Mammary epithelial cell (primary cell): ENCODE measurements at regions of chr20 and their contacts with region 1.

Region 1: DNA sequence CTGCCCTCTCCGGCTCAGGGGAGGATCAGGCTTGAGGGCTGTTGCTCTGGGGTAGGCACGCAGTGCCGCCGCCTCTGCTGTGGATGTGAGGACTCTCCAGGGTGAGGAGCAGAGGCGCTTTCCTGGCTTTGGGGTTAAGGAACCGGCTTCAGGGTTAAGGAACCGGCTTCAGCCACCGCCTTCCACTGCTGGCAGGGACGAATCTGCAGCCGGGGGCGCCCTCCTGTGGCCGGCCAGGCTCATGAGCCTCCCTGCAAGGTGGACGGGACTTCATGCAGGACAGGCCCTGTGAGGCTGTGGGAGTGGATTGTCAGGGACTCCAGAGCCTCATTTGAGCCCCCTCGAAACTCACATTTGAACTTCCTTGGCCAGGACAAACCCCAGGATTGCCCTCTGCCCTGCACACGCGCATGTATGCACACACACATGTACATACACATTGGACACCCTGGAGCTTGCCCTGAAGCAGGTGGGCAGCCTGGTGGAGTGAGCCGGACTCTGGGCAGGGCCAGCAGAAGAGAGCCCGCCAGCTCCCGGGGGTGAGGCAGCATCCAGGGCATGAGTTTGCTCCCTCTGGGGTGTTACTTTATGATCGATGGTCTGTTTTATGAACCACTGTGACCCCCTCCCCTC is 146.8 kb downstream of the PHACTR3 start:
- DNase-seq: peak; percentile 42
- H3K4me3 ChIP-seq: no peak overlapping the region
- H3K27ac ChIP-seq: no peak overlapping the region
- H3K4me1 ChIP-seq: no peaks in the 10 kb centered on the region
- H3K27me3 ChIP-seq: peaks cover 7% of the 10 kb centered on the region
- CTCF ChIP-seq: peak; percentile 64 to 85

Region 2: DNA sequence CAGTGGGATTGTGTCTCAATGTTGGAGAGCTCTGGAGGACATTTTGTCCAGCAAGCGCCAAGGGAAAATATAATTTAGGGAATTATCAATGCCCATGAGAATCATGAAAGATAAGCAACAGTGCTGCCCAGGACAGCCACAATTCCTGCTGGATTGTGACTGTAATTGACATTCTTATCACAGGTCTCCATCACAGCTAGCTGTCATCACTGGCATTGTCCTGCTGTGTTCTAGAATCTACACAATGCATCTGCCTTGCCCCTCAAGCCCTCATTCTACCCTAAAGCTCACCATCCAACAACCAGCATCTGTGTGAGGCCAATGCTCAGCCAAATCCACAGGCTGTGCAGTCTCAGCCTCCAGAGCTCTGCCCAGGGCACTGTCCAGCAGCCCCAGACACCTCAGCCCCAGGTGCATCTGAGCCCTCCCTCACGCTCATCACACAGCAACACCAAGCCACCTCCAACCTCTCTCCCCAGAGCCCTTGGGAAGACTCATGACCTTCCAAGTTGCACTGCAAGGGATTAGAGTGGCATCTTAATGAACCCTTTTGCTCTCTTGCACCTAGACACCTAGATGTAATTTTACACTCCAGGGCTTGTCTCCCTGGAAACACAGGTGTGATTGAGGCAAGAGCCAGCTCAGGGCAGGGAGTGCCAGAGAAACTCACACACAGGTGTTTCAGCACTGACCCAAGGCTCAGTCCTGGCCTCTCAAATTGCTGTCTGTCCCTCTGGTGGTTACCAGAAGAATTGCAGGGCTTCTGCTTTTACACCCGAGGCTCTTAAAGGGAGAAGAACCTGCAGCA is 232.1 kb before region 1 on chr20:
- CTCF ChIA-PET with region 1: no interaction called
- dilution Hi-C with region 1: no loop called
- in situ Hi-C with region 1: no loop called
- intact Hi-C with region 1: loop called (anchors 1 kb)
- DNase-seq: peak; percentile 56
- H3K4me3 ChIP-seq: no peak overlapping the region
- H3K27ac ChIP-seq: no peak overlapping the region
- H3K4me1 ChIP-seq: no peaks in the 10 kb centered on the region
- H3K27me3 ChIP-seq: no peaks in the 10 kb centered on the region
- CTCF ChIP-seq: peak; percentile 85 to 87

Region 3: DNA sequence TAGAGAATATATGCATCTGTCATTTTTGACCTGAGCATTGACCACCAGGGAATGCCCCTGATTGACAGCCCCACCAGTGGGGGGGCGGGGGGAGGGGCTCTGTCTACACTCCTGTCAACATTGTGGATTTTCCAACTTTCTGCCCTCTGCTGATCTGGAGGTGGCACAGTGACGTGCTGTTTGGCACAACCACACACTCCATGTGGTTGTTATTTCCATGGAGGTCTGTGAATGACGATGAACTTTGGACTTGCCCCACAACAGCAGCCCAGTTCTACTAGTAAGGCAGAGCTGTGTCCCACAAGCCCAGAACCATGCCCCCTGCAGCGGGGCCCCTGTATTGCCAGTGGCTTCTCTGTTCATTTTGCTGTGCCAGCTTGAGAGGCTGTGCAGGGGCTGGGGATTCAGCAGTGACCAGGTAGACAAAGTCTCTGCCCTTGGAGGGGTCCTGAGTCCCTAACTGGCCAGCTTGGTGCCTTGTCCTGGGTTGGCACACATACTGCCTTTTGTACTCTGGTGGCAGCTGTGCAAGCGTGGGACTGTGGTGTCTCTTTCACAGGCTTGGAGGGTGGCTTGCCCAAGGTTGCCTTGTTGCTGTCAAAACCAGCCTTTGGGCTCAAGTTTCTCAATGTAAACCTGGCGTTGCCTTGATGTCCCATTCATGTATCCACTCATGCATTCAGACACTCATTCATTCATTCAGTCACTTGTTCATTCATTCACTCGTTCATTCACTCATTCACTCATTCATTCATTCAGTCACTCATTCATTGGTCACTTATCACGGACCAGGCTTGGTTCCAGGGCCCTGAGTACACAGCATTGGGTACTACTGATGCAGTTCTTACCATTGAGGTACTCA is 73.8 kb after region 1 on chr20:
- CTCF ChIA-PET with region 1: no interaction called
- dilution Hi-C with region 1: no loop called
- in situ Hi-C with region 1: no loop called
- intact Hi-C with region 1: no loop called
- DNase-seq: no peak
- H3K4me3 ChIP-seq: no peak overlapping the region
- H3K27ac ChIP-seq: no peak overlapping the region
- H3K4me1 ChIP-seq: peaks cover 28% of the 10 kb centered on the region
- H3K27me3 ChIP-seq: no peaks in the 10 kb centered on the region
- CTCF ChIP-seq: no peak

Region 4: GRCh38 chr20:59835448-59836395 is 84.5 kb after region 1 on chr20:
- CTCF ChIA-PET with region 1: no interaction called
- dilution Hi-C with region 1: no loop called
- in situ Hi-C with region 1: no loop called
- intact Hi-C with region 1: no loop called
- DNase-seq: peak; percentile 68
- H3K4me3 ChIP-seq: peak overlapping the region; percentile 13 to 51 (median 30)
- H3K27ac ChIP-seq: no peak overlapping the region
- H3K4me1 ChIP-seq: peaks cover 54% of the 10 kb centered on the region
- H3K27me3 ChIP-seq: no peaks in the 10 kb centered on the region
- CTCF ChIP-seq: no peak